Ascending aorta (tissue), 2 donors: ENCODE measurements at regions of chr5 and their contacts with region 1.

Region 1: GRCh38 chr5:179345433-179346321 is at the start of gene ADAMTS2:
- DNase-seq: peak in 1 of 2 donors; percentile 75
- H3K4me3 ChIP-seq: peak within 1 kb of the TSS; percentile 72 to 80
- H3K27ac ChIP-seq: peak within 1 kb of the TSS; percentile 60 to 64
- H3K4me1 ChIP-seq: peaks cover 6 to 15% of the 10 kb centered on the region in 2 donors
- H3K27me3 ChIP-seq: no peaks in the 10 kb centered on the region
- CTCF ChIP-seq: peak in 1 of 3 experiments; percentile 9
- total RNA-seq, gene ADAMTS2: 51.0 TPM

Region 2: DNA sequence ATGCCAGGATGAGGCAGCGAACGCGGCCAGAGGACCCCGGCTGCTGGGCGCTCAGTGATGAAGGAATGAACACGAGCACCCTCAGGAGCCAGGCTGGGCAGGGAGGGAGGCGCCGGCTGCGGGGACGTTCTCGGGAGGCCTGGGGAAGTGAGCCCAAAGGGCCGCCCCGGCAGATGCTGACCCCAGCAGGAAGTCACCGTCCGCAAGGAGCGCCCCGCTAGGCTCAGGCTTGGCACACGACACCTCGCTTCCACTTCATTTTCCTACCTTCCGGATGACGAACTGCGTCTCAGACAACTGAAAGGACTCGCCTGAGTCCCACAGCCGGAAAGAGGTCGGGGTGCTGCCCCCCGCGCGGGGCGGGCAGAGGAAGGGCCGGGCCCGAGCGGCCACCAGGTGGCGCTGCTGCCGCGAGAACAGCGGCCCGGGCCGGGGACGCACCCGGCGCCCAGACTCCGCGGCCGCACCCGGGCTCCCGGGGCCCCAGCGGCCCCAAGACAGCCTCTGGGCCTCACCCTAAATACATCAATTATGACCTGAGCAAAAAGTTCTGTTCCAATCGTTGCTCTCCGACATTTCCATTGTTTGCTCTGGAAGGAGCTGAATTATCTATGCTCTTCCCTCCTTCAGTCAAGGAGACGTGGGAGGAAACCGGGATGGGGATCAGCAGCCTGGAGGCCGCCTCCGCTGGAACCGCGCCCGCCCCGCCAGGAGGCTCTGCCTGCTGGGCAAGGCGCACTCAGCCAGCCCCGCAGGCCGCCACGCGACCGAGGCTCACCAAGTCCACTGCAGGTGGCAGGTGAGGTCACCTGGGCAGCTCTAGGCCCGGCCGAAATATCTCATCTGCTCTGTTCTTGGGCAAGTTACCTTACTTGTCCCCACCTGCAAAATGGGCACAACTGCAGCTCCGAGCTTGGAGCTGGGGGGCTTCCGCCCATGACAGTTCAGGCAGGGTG is 178.5 kb before region 1 on chr5:
- intact Hi-C with region 1: loop called (anchors 2 kb)
- DNase-seq: no peak
- H3K4me3 ChIP-seq: peak overlapping the region; percentile 20 to 44
- H3K27ac ChIP-seq: no peak overlapping the region
- H3K4me1 ChIP-seq: peaks cover 0 to 3% of the 10 kb centered on the region in 2 donors
- H3K27me3 ChIP-seq: no peaks in the 10 kb centered on the region
- CTCF ChIP-seq: peak; percentile 73 to 92 (median 77)

Region 3: GRCh38 chr5:179265514-179266290 is 80.0 kb before region 1 on chr5:
- intact Hi-C with region 1: loop called (anchors 1 kb)
- DNase-seq: peak; percentile 86 to 99
- H3K4me3 ChIP-seq: peak overlapping the region in 1 of 2 donors; percentile 48
- H3K27ac ChIP-seq: peak overlapping the region; percentile 73 to 75
- H3K4me1 ChIP-seq: peaks cover 18 to 33% of the 10 kb centered on the region in 2 donors
- H3K27me3 ChIP-seq: no peaks in the 10 kb centered on the region
- CTCF ChIP-seq: no peak

Region 4: GRCh38 chr5:179313849-179314521 is 31.7 kb before region 1 on chr5:
- intact Hi-C with region 1: loop called (anchors 2 kb)
- DNase-seq: peak; percentile 69 to 91
- H3K4me3 ChIP-seq: peak overlapping the region; percentile 14 to 45
- H3K27ac ChIP-seq: peak overlapping the region; percentile 63 to 75
- H3K4me1 ChIP-seq: peaks cover 4 to 6% of the 10 kb centered on the region in 2 donors
- H3K27me3 ChIP-seq: no peaks in the 10 kb centered on the region
- CTCF ChIP-seq: no peak

Region 5: DNA sequence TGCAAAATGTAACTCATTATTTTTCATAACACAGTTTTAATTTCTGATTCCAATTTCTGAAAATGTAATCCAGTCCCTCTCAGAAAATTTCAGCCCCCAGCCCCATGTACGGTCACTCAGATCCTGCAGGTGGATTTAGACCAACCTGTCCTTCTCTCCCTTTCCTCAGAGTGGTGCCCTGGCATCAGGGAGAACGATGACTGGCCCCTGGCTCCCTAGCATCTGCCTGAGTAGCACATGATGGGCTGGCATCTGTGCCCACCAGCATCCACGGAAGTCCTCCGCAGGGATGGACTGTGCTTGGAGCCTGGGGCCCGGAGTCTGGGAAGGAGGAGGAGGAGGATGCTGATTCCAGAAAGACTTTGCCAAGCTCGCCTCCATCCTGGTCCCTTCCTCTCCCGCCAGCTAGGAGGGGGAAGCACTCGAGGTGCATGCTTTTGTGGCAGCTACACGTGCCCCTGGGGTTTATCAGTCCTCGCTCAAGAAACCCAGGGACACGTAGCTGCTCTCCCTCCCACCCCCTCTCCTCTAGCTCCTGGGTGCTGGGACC is 150.3 kb after region 1 on chr5:
- intact Hi-C with region 1: loop called (anchors 10 kb)
- DNase-seq: no peak
- H3K4me3 ChIP-seq: no peak overlapping the region
- H3K27ac ChIP-seq: no peak overlapping the region
- H3K4me1 ChIP-seq: no peaks in the 10 kb centered on the region
- H3K27me3 ChIP-seq: no peaks in the 10 kb centered on the region
- CTCF ChIP-seq: no peak

Region 6: DNA sequence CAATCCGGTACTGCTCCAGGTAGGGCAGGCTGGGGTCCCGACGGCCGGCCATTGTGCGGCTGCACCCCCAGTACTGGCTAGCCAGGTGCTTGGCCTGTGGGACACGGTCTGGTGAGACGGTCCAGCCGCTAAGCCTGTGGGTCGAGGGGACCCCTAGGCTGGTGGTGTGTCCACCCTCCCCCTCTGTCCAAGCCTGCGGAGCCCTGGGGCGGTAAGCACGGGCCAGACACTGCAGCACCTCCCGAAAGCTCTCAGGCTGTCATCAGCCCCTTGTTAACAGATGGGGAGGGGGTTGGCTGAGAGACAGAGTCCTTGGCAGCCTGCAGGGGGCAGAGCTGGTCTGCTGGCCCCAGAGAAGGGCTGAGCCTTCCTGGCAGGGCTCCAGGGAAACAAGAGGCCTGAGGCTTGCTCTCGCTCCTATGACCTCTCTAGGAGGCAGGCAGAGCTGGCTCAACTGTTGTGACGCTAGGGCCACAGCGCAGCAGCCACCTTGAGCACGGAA is 524.8 kb after region 1 on chr5:
- intact Hi-C with region 1: no loop called
- DNase-seq: no peak
- H3K4me3 ChIP-seq: no peak overlapping the region
- H3K27ac ChIP-seq: no peak overlapping the region
- H3K4me1 ChIP-seq: no peaks in the 10 kb centered on the region
- H3K27me3 ChIP-seq: no peaks in the 10 kb centered on the region
- CTCF ChIP-seq: no peak